PC-9 (cell line): ENCODE measurements at regions of chr11 and their contacts with region 1.

Region 1: GRCh38 chr11:65418711-65419459 is 3.7 kb upstream of the NEAT1 start:
- DNase-seq: peak; percentile 98 to 99
- H3K4me3 ChIP-seq: peak overlapping the region; percentile 59
- H3K27ac ChIP-seq: peak overlapping the region; percentile 100
- H3K4me1 ChIP-seq: peaks cover 57% of the 10 kb centered on the region
- H3K27me3 ChIP-seq: no peaks in the 10 kb centered on the region
- CTCF ChIP-seq: no peak

Region 2: GRCh38 chr11:64864473-64865285 is 554.2 kb before region 1 on chr11:
- CTCF ChIA-PET with region 1: no interaction called
- POLR2A ChIA-PET with region 1: interaction called, 15 read pairs
- intact Hi-C with region 1: no loop called
- DNase-seq: peak in 1 of 2 experiments; percentile 79
- H3K4me3 ChIP-seq: no peak overlapping the region
- H3K27ac ChIP-seq: no peak overlapping the region
- H3K4me1 ChIP-seq: peaks cover 41% of the 10 kb centered on the region
- H3K27me3 ChIP-seq: no peaks in the 10 kb centered on the region
- CTCF ChIP-seq: no peak

Region 3: GRCh38 chr11:65366340-65366773 is 52.5 kb before region 1 on chr11:
- CTCF ChIA-PET with region 1: interaction called, 3 read pairs
- POLR2A ChIA-PET with region 1: interaction called, 9 read pairs
- intact Hi-C with region 1: loop called (anchors 1 kb)
- DNase-seq: peak; percentile 55 to 71
- H3K4me3 ChIP-seq: no peak overlapping the region
- H3K27ac ChIP-seq: no peak overlapping the region
- H3K4me1 ChIP-seq: peaks cover 9% of the 10 kb centered on the region
- H3K27me3 ChIP-seq: no peaks in the 10 kb centered on the region
- CTCF ChIP-seq: peak; percentile 92

Region 4: DNA sequence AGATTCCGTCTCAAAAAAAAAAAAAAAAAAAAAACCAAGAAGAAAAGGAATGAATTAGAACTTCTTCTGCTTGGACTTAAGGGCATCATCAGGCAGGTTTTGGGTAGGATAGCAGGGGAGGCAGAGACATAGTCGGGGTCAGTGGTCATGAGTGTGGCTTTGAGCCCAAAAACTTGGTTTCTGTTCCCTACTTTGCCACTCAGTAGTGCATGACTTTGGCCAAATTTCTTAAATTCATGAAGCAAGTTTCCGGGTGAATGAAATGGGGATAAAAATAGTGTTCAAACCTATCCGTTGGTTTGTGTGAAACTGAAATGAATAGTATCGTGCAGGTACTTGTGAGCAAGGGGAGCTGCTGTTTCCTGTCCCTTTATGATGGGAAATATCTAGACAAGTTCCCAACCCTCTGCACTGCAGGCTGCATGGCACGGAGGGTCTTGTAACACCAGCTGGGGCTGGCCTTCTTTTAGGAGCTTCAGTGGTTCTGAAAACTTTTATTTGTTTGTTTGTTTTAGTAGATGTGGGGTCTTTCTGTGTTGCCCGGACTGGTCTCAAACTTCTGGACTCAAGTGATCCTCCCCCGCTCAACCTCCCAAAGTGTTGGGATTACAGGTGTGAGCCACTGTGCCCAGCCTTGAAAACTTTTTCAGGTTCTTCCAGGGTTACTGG is 22.1 kb after region 1 on chr11:
- CTCF ChIA-PET with region 1: no interaction called
- POLR2A ChIA-PET with region 1: interaction called, 13 read pairs
- intact Hi-C with region 1: no loop called
- DNase-seq: peak; percentile 22 to 35
- H3K4me3 ChIP-seq: no peak overlapping the region
- H3K27ac ChIP-seq: peak overlapping the region; percentile 64
- H3K4me1 ChIP-seq: peaks cover 50% of the 10 kb centered on the region
- H3K27me3 ChIP-seq: no peaks in the 10 kb centered on the region
- CTCF ChIP-seq: no peak

Region 5: GRCh38 chr11:65471410-65471762 is 52.5 kb after region 1 on chr11:
- CTCF ChIA-PET with region 1: interaction called, 3 read pairs
- POLR2A ChIA-PET with region 1: interaction called, 27 read pairs
- intact Hi-C with region 1: loop called (anchors 1 kb)
- DNase-seq: peak; percentile 61 to 78
- H3K4me3 ChIP-seq: no peak overlapping the region
- H3K27ac ChIP-seq: peak overlapping the region; percentile 95
- H3K4me1 ChIP-seq: peaks cover 66% of the 10 kb centered on the region
- H3K27me3 ChIP-seq: no peaks in the 10 kb centered on the region
- CTCF ChIP-seq: peak; percentile 61

Region 6: GRCh38 chr11:65506770-65507505 is 88.1 kb after region 1 on chr11:
- CTCF ChIA-PET with region 1: interaction called, 3 read pairs
- POLR2A ChIA-PET with region 1: interaction called, 97 read pairs
- intact Hi-C with region 1: loop called (anchors 1 kb)
- DNase-seq: no peak
- H3K4me3 ChIP-seq: peak overlapping the region; percentile 23; the same call in 1 of the 2 replicates
- H3K27ac ChIP-seq: peak overlapping the region; percentile 97
- H3K4me1 ChIP-seq: peaks cover 56% of the 10 kb centered on the region
- H3K27me3 ChIP-seq: no peaks in the 10 kb centered on the region
- CTCF ChIP-seq: no peak

Region 7: DNA sequence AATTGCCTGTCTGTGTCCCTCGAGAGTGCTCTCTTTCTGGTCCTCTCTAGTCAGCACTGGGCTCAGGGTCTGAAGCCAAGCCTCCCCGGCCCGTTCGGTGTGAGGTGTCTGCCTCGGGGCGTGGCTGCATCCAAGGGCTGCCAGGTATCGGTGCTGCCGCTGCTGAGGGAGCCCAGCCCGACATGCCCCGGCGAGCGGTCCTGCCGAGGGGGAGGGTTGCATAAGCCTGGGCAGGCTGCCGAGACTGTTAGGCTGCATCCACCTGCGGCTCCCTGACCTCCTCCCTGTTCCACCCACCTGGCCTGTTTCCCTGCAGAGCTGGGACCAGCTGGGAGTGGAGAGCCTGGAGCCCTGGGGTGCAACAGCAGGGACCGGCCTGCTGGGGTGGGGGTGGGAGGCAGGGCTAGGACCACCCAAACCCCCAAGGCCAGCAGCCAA is 374.3 kb after region 1 on chr11:
- CTCF ChIA-PET with region 1: no interaction called
- POLR2A ChIA-PET with region 1: interaction called, 15 read pairs
- intact Hi-C with region 1: no loop called
- DNase-seq: peak; percentile 76 to 91
- H3K4me3 ChIP-seq: peak overlapping the region; percentile 33; the same call in 1 of the 2 replicates
- H3K27ac ChIP-seq: peak overlapping the region; percentile 89
- H3K4me1 ChIP-seq: peaks cover 62% of the 10 kb centered on the region
- H3K27me3 ChIP-seq: no peaks in the 10 kb centered on the region
- CTCF ChIP-seq: no peak